ENCODE measurements at regions of chr17 and their contacts with region 1.

Region 1: GRCh38 chr17:48047741-48048383 is at the start of gene NFE2L1:
- DNase-seq: peak; percentile 98 to 100 (median 98)
- H3K4me3 ChIP-seq: peak within 1 kb of the TSS; percentile 86 to 88
- H3K4me3 Mint-ChIP-seq: peak within 1 kb of the TSS; percentile 94 to 99 (median 96)
- H3K27ac ChIP-seq: peak within 1 kb of the TSS; percentile 76
- H3K27ac Mint-ChIP-seq: peak within 1 kb of the TSS; percentile 94 to 99 (median 99)
- H3K4me1 ChIP-seq: peaks cover 54% of the 10 kb centered on the region
- H3K4me1 Mint-ChIP-seq: peaks cover 29 to 69% (median 49%) of the 10 kb centered on the region in 4 donors
- H3K27me3 ChIP-seq: no peaks in the 10 kb centered on the region
- H3K27me3 Mint-ChIP-seq: no peaks in the 10 kb centered on the region
- total RNA-seq, gene NFE2L1: 53.5 to 62.5 TPM

Region 2: GRCh38 chr17:48037036-48037837 is 10.6 kb before region 1 on chr17 and contains the start of gene COPZ2:
- CTCF ChIA-PET with region 1: interaction called, 15 read pairs
- POLR2A ChIA-PET with region 1: interaction called, 31 read pairs
- intact Hi-C with region 1: loop called (anchors 1 kb)
- DNase-seq: peak; percentile 62 to 74 (median 63)
- H3K4me3 ChIP-seq: peak within 1 kb of the TSS; percentile 23 to 67
- H3K4me3 Mint-ChIP-seq: peak within 1 kb of the TSS; percentile 87 to 95 (median 88)
- H3K27ac ChIP-seq: no peak within 1 kb of the TSS
- H3K27ac Mint-ChIP-seq: peak within 1 kb of the TSS in 6 of 7 donors; percentile 4 to 67 (median 30)
- H3K4me1 ChIP-seq: peaks cover 7% of the 10 kb centered on the region
- H3K4me1 Mint-ChIP-seq: peaks cover 4 to 7% (median 5%) of the 10 kb centered on the region in 4 donors
- H3K27me3 ChIP-seq: no peaks in the 10 kb centered on the region
- H3K27me3 Mint-ChIP-seq: peaks cover 7 to 32% of the 10 kb centered on the region in 2 donors
- total RNA-seq, gene COPZ2: 1.9 to 2.0 TPM

Region 3: DNA sequence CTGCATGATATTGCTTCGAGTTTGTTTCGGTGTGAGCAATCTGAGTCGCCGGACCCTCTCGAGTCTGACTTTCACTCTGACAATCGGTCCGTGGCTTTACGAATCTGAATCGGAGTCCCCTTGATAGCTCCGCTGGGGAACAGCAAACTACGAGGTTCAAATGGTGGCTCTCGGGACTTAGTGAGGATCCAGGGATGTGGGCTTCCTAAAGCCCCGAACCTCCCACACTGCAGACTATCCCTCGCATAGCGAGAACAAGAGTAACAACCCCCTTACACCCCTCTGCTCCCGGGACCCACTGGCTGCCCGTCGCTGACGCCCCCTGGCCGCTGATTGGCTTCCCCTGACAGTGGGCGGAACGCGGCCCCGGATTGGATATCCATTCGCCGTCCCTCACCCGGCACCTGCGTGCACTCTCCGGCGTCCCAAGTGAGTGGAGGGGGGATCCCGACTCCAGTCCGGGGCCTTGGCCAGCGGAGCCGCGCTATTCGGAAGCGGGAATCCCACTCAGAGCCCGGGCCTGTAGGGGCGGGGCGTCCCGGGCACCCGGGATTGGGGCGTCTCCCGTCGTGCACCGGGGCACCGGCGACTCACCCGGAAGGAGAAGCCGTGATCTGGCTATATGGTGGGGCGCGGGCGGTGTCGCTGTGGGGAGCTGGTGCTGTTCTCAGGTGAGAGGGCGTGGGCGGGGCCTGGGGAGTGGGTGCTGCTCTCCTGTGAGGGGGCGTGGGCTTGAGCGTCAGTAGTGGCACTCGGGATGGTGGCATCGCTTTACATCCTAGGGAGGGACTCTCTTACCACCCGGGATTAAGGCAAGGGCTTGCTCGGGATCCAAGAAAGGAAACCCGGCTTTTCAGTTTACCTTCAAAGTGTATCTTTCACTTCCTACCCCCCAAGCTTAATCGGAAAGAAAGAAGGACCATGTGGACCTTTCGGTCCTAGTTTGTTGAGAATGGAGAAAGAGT is 59.6 kb after region 1 on chr17 and contains the start of gene SNX11:
- CTCF ChIA-PET with region 1: interaction called, 3 read pairs
- POLR2A ChIA-PET with region 1: interaction called, 23 read pairs
- intact Hi-C with region 1: loop called (anchors 1 kb)
- DNase-seq: peak; percentile 93 to 98 (median 95)
- H3K4me3 ChIP-seq: peak within 1 kb of the TSS; percentile 83 to 98
- H3K4me3 Mint-ChIP-seq: peak within 1 kb of the TSS; percentile 92 to 99 (median 97)
- H3K27ac ChIP-seq: peak within 1 kb of the TSS; percentile 85
- H3K27ac Mint-ChIP-seq: peak within 1 kb of the TSS; percentile 82 to 96 (median 94)
- H3K4me1 ChIP-seq: peaks cover 47% of the 10 kb centered on the region
- H3K4me1 Mint-ChIP-seq: peaks cover 36 to 68% (median 51%) of the 10 kb centered on the region in 4 donors
- H3K27me3 ChIP-seq: no peaks in the 10 kb centered on the region
- H3K27me3 Mint-ChIP-seq: no peaks in the 10 kb centered on the region
- total RNA-seq, gene SNX11: 20.8 to 22.0 TPM

Region 4: DNA sequence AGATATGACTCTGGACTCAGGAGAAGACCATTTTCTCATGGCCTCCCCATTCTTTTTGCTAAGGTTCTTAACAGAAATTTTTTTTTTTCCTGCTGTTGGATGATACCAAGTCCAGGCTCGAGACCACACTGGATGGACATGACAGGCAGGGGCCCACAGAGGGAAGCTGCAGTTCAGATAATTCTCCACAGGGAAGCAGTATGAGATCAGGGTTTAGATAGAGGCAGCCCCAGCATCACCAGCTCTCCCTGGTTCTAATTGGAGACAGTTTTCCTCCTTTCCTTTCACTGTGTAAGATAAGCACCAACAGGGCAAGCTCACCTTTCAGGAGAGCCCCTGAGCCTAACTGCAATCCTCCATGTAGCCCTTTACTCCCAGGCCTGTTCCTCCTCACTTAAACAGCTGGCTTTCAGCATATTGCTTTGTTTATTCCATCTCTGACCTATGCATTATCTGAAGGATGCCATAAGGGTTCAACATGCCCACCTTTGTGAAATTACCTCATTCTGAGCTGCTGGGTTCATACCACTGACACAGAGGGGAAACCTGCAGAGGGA is 167.8 kb after region 1 on chr17:
- CTCF ChIA-PET with region 1: no interaction called
- POLR2A ChIA-PET with region 1: no interaction called
- intact Hi-C with region 1: no loop called
- DNase-seq: no peak
- H3K4me3 ChIP-seq: no peak overlapping the region
- H3K4me3 Mint-ChIP-seq: no peak overlapping the region
- H3K27ac ChIP-seq: no peak overlapping the region
- H3K27ac Mint-ChIP-seq: peak overlapping the region in 3 of 7 donors; percentile 67 to 73 (median 69)
- H3K4me1 ChIP-seq: peaks cover 4% of the 10 kb centered on the region
- H3K4me1 Mint-ChIP-seq: peaks cover 16 to 27% (median 24%) of the 10 kb centered on the region in 4 donors
- H3K27me3 ChIP-seq: no peaks in the 10 kb centered on the region
- H3K27me3 Mint-ChIP-seq: no peaks in the 10 kb centered on the region

Region 5: DNA sequence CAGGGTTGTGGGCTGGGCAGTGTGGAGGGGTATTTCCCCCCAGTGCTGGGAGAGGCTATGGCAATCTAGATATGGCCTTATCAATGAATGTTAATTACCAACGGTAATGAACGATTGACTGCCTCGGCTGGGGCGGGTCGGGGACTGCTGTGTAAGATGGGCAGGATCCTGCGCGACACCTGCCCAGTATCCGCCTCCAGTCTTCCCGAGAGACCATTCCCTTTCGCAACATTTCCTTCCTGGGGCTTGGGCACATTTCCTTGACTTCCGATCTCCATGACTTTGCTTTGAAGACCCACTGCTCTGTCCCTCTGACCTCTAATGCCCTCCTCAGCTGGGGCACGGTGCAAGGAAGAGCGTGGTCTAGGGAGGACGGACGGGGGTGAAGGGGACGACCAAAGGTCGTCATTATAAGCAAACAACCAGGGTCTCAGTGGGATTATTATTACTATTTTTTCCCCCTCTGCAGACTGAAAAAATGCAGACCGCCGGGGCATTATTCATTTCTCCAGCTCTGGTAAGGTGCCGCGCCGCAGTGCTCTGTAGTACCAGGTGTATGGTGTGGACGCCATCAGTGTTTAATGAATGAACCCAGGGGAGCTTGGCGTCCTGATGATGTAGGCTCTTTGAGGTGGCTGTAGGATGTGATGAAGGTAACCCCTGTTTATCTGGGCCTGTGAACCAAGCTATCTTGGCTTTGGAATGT is 845.2 kb after region 1 on chr17:
- CTCF ChIA-PET with region 1: no interaction called
- POLR2A ChIA-PET with region 1: interaction called, 5 read pairs
- intact Hi-C with region 1: loop called (anchors 5 kb)
- DNase-seq: peak in 1 of 5 donors; percentile 7
- H3K4me3 ChIP-seq: peak overlapping the region; percentile 80 to 93
- H3K4me3 Mint-ChIP-seq: peak overlapping the region; percentile 86 to 97 (median 93)
- H3K27ac ChIP-seq: peak overlapping the region; percentile 69
- H3K27ac Mint-ChIP-seq: peak overlapping the region; percentile 90 to 98 (median 97)
- H3K4me1 ChIP-seq: peaks cover 22% of the 10 kb centered on the region
- H3K4me1 Mint-ChIP-seq: peaks cover 12 to 27% (median 19%) of the 10 kb centered on the region in 4 donors
- H3K27me3 ChIP-seq: no peaks in the 10 kb centered on the region
- H3K27me3 Mint-ChIP-seq: no peaks in the 10 kb centered on the region

Measured in CD4-positive, alpha-beta memory T cell (primary cell).